ENCODE measurements at regions of chr5 and their contacts with region 1.

Region 1: GRCh38 chr5:141564216-141564692 is 54.5 kb downstream of the DIAPH1 start:
- DNase-seq: peak; percentile 85
- H3K4me3 Mint-ChIP-seq: no peak overlapping the region
- H3K27ac Mint-ChIP-seq: peak overlapping the region; percentile 77
- H3K4me1 Mint-ChIP-seq: peaks cover 32% of the 10 kb centered on the region
- H3K27me3 Mint-ChIP-seq: no peaks in the 10 kb centered on the region

Region 2: DNA sequence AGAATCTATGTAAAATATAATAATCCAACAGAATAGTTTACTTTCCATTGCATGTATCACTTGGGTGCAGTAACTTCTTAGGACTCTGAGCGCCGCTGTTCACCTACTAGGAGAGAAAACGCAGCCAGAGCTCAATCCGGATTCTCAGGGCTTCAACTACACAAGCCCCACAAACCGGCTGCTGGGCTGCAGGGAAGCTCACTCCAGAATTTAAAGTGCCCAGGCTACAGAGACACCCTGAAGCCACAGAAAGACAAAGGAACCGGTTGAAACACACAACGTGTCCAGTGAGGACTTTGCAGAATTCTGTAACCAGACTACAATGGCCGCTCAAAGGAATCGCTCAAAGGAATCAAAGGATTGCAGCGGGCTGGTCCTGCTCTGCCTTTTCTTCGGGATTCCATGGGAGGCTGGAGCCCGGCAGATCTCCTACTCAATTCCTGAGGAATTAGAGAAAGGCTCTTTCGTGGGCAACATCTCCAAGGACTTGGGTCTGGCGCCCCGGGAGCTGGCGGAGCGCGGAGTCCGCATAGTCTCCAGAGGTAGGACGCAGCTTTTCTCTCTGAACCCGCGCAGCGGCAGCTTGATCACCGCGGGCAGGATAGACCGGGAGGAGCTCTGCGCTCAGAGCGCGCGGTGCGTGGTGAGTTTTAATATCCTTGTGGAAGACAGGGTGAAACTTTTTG is 151.3 kb before region 1 on chr5 and contains the start of gene PCDHGA10:
- CTCF ChIA-PET with region 1: interaction called, 18 read pairs
- POLR2A ChIA-PET with region 1: no interaction called
- DNase-seq: peak; percentile 47
- H3K4me3 Mint-ChIP-seq: peak within 1 kb of the TSS; percentile 71
- H3K27ac Mint-ChIP-seq: peak within 1 kb of the TSS; percentile 50
- H3K4me1 Mint-ChIP-seq: peaks cover 17% of the 10 kb centered on the region
- H3K27me3 Mint-ChIP-seq: peaks cover 64% of the 10 kb centered on the region
- total RNA-seq, gene PCDHGA10: not detected

Region 3: GRCh38 chr5:141430332-141431113 is 133.7 kb before region 1 on chr5 and contains the start of gene PCDHGA12:
- CTCF ChIA-PET with region 1: interaction called, 10 read pairs
- POLR2A ChIA-PET with region 1: no interaction called
- DNase-seq: peak; percentile 39
- H3K4me3 Mint-ChIP-seq: peak within 1 kb of the TSS; percentile 59
- H3K27ac Mint-ChIP-seq: peak within 1 kb of the TSS; percentile 80
- H3K4me1 Mint-ChIP-seq: peaks cover 11% of the 10 kb centered on the region
- H3K27me3 Mint-ChIP-seq: peaks cover 39% of the 10 kb centered on the region
- total RNA-seq, gene PCDHGA12: not detected

Region 4: GRCh38 chr5:141524604-141525597 is 39.4 kb before region 1 on chr5:
- CTCF ChIA-PET with region 1: interaction called, 10 read pairs
- POLR2A ChIA-PET with region 1: no interaction called
- DNase-seq: peak; percentile 41
- H3K4me3 Mint-ChIP-seq: no peak overlapping the region
- H3K27ac Mint-ChIP-seq: no peak overlapping the region
- H3K4me1 Mint-ChIP-seq: peaks cover 22% of the 10 kb centered on the region
- H3K27me3 Mint-ChIP-seq: no peaks in the 10 kb centered on the region

Region 5: DNA sequence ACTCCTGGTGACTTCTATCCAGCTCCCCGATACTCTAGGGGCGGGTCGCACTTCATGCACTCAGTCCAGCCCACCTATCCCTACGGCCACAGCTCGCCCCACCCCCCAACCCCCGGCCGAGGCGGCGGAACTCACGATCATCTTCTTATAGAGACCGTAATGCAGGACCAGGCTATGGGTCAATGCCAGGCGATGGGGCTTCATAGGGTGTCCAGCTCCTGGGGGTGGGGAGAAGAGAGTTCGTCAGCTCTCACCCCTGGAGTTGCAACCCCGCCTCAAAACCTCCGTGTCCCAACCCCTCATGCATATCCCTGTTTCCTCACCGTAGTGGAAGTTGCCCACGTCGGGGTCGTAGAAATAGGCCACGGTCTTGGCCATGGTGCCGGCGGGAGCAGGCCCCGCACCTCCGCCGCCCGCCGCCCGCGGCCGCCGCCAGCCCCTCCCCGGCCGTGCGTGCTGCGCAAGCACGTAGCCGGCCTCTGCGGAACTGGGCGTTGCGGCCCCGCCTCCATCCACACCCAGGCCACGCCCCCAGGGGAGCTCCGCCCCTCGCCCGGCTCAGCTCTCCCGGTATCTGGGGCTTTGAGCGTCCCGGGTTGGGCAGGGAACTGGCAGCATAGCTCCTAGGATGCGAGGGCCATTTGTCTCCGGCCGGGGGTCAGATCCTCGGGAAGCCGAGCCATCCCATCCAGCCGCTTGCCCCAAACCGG is 72.3 kb after region 1 on chr5 and contains the starts of genes HDAC3 and RELL2:
- CTCF ChIA-PET with region 1: interaction called, 24 read pairs
- POLR2A ChIA-PET with region 1: no interaction called
- DNase-seq: peak; percentile 92
- H3K4me3 Mint-ChIP-seq: peak within 1 kb of the TSS; percentile 92
- H3K27ac Mint-ChIP-seq: peak within 1 kb of the TSS; percentile 90
- H3K4me1 Mint-ChIP-seq: peaks cover 51% of the 10 kb centered on the region
- H3K27me3 Mint-ChIP-seq: no peaks in the 10 kb centered on the region
- total RNA-seq, gene HDAC3: 70.2 to 73.9 TPM
- total RNA-seq, gene RELL2: 25.1 to 26.9 TPM

Measured in activated CD4-positive, alpha-beta T cell treated with anti-CD3 and anti-CD28 coated beads, Interleukin-2, amount 10 ng/mL, durations not matched to agents 7 days and 5 days (primary cell).